ENCODE measurements at regions of chr16 and their contacts with region 1.

Region 1: GRCh38 chr16:70470927-70471341 is 16.5 kb downstream of the FCSK start:
- DNase-seq: no peak
- ATAC-seq: no peak
- H3K4me3 Mint-ChIP-seq: no peak overlapping the region
- H3K27ac Mint-ChIP-seq: no peak overlapping the region
- H3K4me1 Mint-ChIP-seq: peaks cover 4% of the 10 kb centered on the region
- H3K27me3 Mint-ChIP-seq: no peaks in the 10 kb centered on the region

Region 2: DNA sequence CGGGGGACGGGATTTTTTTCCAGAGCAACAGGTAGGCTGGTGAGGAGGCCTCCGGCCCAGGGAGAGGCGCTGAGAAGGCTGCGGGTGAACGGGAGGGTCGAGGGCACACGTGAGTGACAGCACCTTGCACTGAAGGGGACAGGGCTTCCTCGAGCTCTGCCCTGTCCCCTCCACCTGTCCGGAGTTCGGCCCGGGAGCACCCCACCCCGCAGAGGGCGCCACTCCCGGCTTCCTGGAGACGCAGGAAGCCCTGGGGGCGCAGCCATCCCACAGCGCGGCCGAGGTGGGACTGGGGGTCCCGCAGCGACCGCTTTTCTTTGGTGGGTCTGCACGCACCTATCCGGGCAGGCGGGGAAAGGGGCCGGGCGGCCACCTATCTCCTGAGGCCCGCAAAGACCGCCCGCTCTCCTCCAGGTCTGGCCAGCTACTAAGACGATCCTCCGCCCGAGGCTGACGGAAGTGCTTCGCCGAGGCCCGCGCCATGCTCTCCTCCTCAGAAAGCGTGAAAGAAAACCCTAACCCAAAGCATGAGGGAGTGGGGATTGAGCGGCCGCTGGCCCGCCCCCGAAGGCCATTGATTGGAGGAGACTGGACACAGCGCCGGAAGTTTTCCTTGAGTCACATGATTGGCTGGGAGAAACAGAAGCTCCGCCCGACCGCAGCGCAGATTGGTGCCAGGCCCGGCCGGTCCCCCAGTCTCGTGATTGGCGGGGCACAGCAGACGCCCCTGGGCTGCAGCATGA is 89.9 kb before region 1 on chr16:
- CTCF ChIA-PET with region 1: no interaction called
- POLR2A ChIA-PET with region 1: interaction called, 5 read pairs
- intact Hi-C with region 1: loop called (anchors 1 kb)
- DNase-seq: peak; percentile 98
- ATAC-seq: peak; percentile 93
- H3K4me3 Mint-ChIP-seq: peak overlapping the region; percentile 86
- H3K27ac Mint-ChIP-seq: peak overlapping the region; percentile 91
- H3K4me1 Mint-ChIP-seq: peaks cover 12% of the 10 kb centered on the region
- H3K27me3 Mint-ChIP-seq: no peaks in the 10 kb centered on the region

Region 3: GRCh38 chr16:70428178-70428998 is 42.5 kb before region 1 on chr16:
- CTCF ChIA-PET with region 1: no interaction called
- POLR2A ChIA-PET with region 1: no interaction called
- intact Hi-C with region 1: loop called in 1 of 2 experiments (anchors 1 kb)
- DNase-seq: peak; percentile 85
- ATAC-seq: peak; percentile 63
- H3K4me3 Mint-ChIP-seq: no peak overlapping the region
- H3K27ac Mint-ChIP-seq: peak overlapping the region; percentile 90
- H3K4me1 Mint-ChIP-seq: peaks cover 57% of the 10 kb centered on the region
- H3K27me3 Mint-ChIP-seq: no peaks in the 10 kb centered on the region

Region 4: DNA sequence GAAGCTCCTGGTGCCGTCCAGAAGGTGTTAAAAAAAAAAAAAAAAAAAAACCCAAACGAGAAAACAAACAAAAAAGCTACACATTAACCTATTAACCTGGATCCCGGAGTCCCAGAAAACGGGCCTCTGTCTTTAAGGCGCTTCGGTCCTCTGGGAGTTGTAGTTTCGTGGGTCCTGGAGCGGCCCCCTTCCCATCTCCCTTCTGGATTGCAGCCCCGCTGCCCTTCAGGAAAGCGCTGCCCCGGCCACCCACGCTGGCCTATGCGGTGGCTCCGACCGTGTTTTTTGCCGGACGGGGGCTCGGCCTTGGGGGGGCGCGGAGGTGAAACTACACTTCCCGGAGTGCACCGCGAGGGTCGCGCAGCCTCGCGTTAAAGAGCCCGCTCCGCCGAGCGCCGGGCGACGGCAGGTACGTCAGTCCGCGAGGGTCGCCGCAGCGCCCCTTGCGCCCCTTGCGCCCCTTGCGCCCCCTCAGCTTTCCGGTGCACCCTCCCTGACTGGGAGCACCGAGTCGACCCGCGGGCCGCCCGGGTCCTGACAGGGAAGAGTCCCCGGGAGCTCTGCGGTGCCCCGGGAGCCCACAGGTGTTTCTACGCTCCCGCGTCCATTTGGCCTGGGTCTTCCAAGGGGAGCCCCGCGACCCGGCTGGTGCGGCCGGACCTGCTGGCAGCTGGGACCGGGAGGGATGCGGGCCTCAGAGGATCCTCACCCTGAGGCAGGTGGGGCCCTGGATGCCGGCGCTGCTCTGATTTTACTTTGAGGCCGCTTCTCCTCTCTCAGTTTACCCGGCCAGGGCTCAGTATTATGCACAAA is 16.5 kb before region 1 on chr16 and contains the start of gene FCSK:
- CTCF ChIA-PET with region 1: interaction called, 4 read pairs
- POLR2A ChIA-PET with region 1: interaction called, 3 read pairs
- intact Hi-C with region 1: loop called in 1 of 2 experiments (anchors 1 kb)
- DNase-seq: peak; percentile 79
- ATAC-seq: peak; percentile 94
- H3K4me3 Mint-ChIP-seq: peak within 1 kb of the TSS; percentile 85
- H3K27ac Mint-ChIP-seq: peak within 1 kb of the TSS; percentile 88
- H3K4me1 Mint-ChIP-seq: peaks cover 16% of the 10 kb centered on the region
- H3K27me3 Mint-ChIP-seq: no peaks in the 10 kb centered on the region
- total RNA-seq, gene FCSK: 10.3 to 13.4 TPM

Region 5: GRCh38 chr16:70737377-70738082 is 266.6 kb after region 1 on chr16:
- CTCF ChIA-PET with region 1: no interaction called
- POLR2A ChIA-PET with region 1: no interaction called
- intact Hi-C with region 1: loop called in 1 of 2 experiments (anchors 1 kb)
- DNase-seq: peak; percentile 91
- ATAC-seq: peak; percentile 88
- H3K4me3 Mint-ChIP-seq: peak overlapping the region; percentile 55
- H3K27ac Mint-ChIP-seq: peak overlapping the region; percentile 97
- H3K4me1 Mint-ChIP-seq: peaks cover 60% of the 10 kb centered on the region
- H3K27me3 Mint-ChIP-seq: no peaks in the 10 kb centered on the region

Measured in activated CD4-positive, alpha-beta T cell treated with anti-CD3 and anti-CD28 coated beads for 36 hours (primary cell).